ENCODE measurements at regions of chr11 and their contacts with region 1.

Region 1: GRCh38 chr11:125429166-125429707 is 66.8 kb downstream of the FEZ1 start:
- DNase-seq: peak; percentile 74
- H3K4me3 ChIP-seq: no peak overlapping the region; a peak in 1 of 4 replicates
- H3K27ac ChIP-seq: no peak overlapping the region
- H3K4me1 ChIP-seq: peaks cover 0 to 4% of the 10 kb centered on the region in 2 experiments; a peak in 1 of 4 replicates
- H3K27me3 ChIP-seq: peaks cover 6% of the 10 kb centered on the region; the same call in 1 of the 2 replicates
- CTCF ChIP-seq: peak; percentile 71
- EP300 ChIP-seq: no peak
- RAD21 ChIP-seq: peak; percentile 78

Region 2: DNA sequence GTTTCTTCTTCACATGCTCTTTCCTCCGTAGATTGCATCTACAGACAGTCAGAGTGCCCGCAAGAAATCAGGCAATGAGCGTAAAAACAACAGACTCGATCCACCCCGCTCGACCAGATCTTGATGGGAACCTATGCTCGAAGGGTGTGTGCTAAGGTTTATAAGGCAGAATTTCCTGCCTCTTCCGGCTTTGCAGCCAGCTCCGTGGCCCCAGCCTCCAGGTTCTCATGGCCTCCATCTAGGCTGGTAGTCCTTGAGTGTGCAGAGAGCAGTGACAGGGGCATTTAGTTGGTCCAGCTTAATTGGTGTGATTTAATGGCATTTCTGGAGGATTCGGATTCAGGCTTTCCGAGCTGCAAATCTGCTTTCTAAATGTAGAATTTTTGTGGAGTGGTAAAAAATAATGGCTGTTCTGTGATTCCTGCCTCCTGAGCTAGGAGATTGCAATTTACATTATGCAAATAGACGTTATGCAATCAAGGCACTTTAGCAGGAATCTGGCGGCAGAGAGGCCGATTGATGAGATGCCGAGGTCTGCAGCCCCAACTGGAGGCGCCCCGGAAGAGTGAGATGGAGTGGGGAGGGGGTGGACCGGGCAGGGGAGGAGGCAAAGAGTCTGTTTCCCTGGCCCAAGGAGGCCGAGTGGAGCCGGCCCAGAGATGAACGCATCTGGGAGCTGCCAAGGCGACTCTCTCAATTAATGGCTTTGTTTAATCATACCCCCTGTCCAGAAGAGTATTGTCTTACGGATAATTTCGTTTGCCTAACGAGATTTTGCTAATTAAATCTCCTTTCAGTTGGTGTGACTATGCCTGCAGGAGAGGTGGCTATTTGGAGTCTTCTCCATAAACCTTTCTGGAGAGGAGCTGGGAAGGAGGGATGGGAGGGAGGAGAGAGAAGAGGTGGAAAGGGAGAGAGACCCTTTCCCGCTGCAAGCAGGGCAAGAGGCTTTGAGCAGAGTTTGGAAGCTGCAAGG is 189.4 kb before region 1 on chr11:
- CTCF ChIA-PET with region 1: no interaction called
- POLR2A ChIA-PET with region 1: no interaction called
- DNase-seq: no peak
- H3K4me3 ChIP-seq: no peak overlapping the region
- H3K27ac ChIP-seq: no peak overlapping the region
- H3K4me1 ChIP-seq: no peaks in the 10 kb centered on the region; a peak in 1 of 4 replicates
- H3K27me3 ChIP-seq: no peaks in the 10 kb centered on the region
- CTCF ChIP-seq: no peak
- EP300 ChIP-seq: no peak
- RAD21 ChIP-seq: no peak

Region 3: DNA sequence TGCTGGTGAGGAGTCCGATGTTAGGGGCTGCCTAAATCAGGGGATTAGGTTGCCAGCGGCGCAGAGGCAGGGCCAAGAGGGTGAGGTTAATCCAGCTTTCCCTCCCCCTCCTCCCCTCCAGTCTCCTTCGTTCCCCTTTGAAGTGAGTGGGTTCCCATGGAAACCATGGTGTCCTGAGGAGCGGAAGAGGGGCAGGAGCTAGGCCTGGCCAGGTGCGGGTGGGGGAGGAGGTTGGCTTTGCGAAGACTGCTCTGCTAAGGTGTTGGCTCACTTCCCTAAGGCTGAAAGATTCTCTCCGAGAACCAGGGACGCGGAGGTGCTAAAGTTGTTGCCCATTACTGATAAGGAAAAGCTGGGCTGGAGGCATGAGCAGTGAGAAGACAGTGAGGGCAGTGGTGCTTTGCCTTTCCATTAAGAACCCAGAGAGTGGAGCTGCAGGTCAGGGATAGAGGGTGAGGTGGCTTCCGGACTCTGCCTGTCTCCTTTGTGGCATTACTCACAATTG is 57.8 kb before region 1 on chr11:
- CTCF ChIA-PET with region 1: interaction called, 13 read pairs
- POLR2A ChIA-PET with region 1: no interaction called
- DNase-seq: peak; percentile 46
- H3K4me3 ChIP-seq: no peak overlapping the region
- H3K27ac ChIP-seq: no peak overlapping the region
- H3K4me1 ChIP-seq: peaks cover 0 to 21% of the 10 kb centered on the region in 2 experiments; a peak in 1 of 4 replicates
- H3K27me3 ChIP-seq: peaks cover 25% of the 10 kb centered on the region
- CTCF ChIP-seq: no peak
- EP300 ChIP-seq: no peak
- RAD21 ChIP-seq: 0 out of 2 replicates have a peak, but pooled peaks have one; percentile 5

Region 4: GRCh38 chr11:125413226-125413625 is 16.0 kb before region 1 on chr11:
- CTCF ChIA-PET with region 1: interaction called, 31 read pairs
- POLR2A ChIA-PET with region 1: no interaction called
- DNase-seq: no peak
- H3K4me3 ChIP-seq: no peak overlapping the region
- H3K27ac ChIP-seq: no peak overlapping the region
- H3K4me1 ChIP-seq: peaks cover 0 to 3% of the 10 kb centered on the region in 2 experiments; a peak in 1 of 4 replicates
- H3K27me3 ChIP-seq: peaks cover 1% of the 10 kb centered on the region; the same call in 1 of the 2 replicates
- CTCF ChIP-seq: no peak
- EP300 ChIP-seq: no peak
- RAD21 ChIP-seq: no peak

Region 5: DNA sequence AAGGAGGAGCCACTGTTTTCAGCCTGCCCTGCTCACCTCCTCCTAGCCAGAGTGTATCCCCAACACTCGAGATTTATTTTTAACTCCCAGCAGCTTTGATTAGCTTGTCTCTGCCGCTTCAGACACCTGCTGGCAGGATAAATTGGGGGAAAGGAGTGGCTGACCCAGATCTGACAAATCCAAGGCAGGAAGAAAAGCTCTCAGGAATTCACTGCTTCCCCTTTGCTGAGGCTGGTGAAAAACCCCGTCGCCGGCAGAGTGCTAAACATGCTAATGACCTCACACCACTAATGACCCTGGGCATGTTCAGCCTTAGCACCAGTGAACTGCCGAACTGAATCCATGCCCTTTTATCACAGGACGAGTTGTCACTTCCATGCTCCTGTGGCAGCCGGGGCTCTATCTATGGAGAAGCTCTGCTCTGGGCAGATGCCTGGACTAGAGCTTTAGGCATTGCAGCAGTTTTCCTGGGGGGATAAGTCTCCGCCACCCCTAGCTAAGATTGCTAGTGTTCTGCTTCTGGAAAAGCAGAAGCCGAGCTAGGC is 14.6 kb after region 1 on chr11:
- CTCF ChIA-PET with region 1: interaction called, 32 read pairs
- POLR2A ChIA-PET with region 1: no interaction called
- DNase-seq: no peak
- H3K4me3 ChIP-seq: no peak overlapping the region
- H3K27ac ChIP-seq: no peak overlapping the region
- H3K4me1 ChIP-seq: peaks cover 0 to 14% of the 10 kb centered on the region in 2 experiments; a peak in 1 of 4 replicates
- H3K27me3 ChIP-seq: no peaks in the 10 kb centered on the region; the same call in 1 of the 2 replicates
- CTCF ChIP-seq: no peak
- EP300 ChIP-seq: no peak
- RAD21 ChIP-seq: no peak